A549 (cell line): ENCODE measurements at regions of chr7 and their contacts with region 1.

Region 1: GRCh38 chr7:101138213-101138870 is 11.4 kb downstream of the SERPINE1 start:
- DNase-seq: peak; percentile 75 to 96
- ATAC-seq: peak; percentile 39 to 73
- H3K4me3 ChIP-seq: no peak overlapping the region
- H3K27ac ChIP-seq: peak overlapping the region; percentile 79 to 88
- H3K4me1 ChIP-seq: peaks cover 57% of the 10 kb centered on the region
- CTCF ChIP-seq: peak; percentile 95
- EP300 ChIP-seq: peak; percentile 28 to 65; a peak in 3 of 5 replicates
- POLR2A ChIP-seq: no peak
- RAD21 ChIP-seq: peak; percentile 57 to 90

Region 2: DNA sequence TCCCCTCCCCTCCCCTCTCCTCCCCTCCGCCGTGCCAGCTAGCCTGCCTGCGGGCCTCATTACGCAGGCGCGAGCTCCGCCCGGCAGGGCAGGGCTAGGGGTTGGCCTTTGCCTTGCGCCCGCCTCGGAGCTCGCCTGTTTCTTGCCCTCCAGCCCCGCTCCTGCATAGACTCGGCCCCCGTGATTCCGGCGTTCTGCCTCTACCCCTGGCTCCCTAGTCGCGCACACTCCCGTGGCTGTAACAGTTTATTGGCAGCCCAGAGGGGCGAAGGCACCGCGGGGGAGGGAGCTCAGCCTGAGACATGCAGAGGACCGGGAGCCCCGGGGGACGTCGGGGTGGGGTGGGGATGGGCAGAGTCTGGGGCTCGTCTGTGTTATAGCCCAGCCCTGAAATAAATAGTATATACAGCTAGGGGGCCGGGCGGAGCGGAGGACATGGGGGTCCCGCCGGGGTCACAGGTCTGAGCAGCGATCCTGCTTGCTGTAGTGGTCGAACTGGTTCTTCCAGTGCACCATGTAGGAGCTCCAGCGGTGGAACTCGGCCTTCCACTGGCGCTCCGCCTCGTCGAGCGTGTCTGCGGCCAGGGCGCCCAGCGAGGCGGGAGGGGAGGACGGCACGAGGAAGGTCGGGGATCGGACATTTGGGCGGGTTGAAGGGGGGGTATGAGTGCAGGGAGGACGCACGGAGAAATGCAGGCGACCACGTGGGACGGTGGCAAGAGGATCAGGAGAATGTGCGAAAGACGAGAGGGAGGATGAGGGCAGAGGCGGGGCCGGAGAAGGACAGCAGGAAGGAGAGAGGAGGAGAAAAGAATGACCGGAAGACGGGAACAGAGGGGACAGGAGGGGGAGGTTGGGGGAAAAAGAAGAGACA is 248.3 kb before region 1 on chr7:
- CTCF ChIA-PET with region 1: interaction called, 25 read pairs
- POLR2A ChIA-PET with region 1: no interaction called
- DNase-seq: peak; percentile 93 to 96
- ATAC-seq: peak; percentile 68 to 91
- H3K4me3 ChIP-seq: peak overlapping the region; percentile 92
- H3K27ac ChIP-seq: peak overlapping the region; percentile 86 to 95
- H3K4me1 ChIP-seq: peaks cover 34% of the 10 kb centered on the region
- CTCF ChIP-seq: no peak
- EP300 ChIP-seq: no peak
- POLR2A ChIP-seq: peak; percentile 74
- RAD21 ChIP-seq: no peak

Region 3: DNA sequence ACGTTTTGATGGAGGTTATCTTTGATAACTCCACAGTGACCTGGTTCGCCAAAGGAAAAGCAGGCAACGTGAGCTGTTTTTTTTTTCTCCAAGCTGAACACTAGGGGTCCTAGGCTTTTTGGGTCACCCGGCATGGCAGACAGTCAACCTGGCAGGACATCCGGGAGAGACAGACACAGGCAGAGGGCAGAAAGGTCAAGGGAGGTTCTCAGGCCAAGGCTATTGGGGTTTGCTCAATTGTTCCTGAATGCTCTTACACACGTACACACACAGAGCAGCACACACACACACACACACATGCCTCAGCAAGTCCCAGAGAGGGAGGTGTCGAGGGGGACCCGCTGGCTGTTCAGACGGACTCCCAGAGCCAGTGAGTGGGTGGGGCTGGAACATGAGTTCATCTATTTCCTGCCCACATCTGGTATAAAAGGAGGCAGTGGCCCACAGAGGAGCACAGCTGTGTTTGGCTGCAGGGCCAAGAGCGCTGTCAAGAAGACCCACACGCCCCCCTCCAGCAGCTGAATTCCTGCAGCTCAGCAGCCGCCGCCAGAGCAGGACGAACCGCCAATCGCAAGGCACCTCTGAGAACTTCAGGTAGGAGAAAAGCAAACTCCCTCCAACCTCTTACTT is 11.6 kb before region 1 on chr7 and contains the start of gene SERPINE1:
- CTCF ChIA-PET with region 1: interaction called, 72 read pairs
- POLR2A ChIA-PET with region 1: interaction called, 24 read pairs
- DNase-seq: peak; percentile 98
- ATAC-seq: peak; percentile 73 to 78
- H3K4me3 ChIP-seq: peak within 1 kb of the TSS; percentile 63
- H3K27ac ChIP-seq: peak within 1 kb of the TSS; percentile 94 to 95
- H3K4me1 ChIP-seq: peaks cover 78% of the 10 kb centered on the region
- CTCF ChIP-seq: peak; percentile 29; the same call in 2 of the 3 replicates
- EP300 ChIP-seq: 0 out of 5 replicates have a peak, but pooled peaks of 1 of the 2 experiments have one; percentile 10
- POLR2A ChIP-seq: peak; percentile 98
- RAD21 ChIP-seq: peak in 1 of 2 experiments; percentile 8; a peak in 2 of 5 replicates
- polyA plus RNA-seq, gene SERPINE1: 300 and 355 TPM in 2 replicates

Region 4: GRCh38 chr7:101173752-101174244 is 35.5 kb after region 1 on chr7:
- CTCF ChIA-PET with region 1: interaction called, 56 read pairs
- POLR2A ChIA-PET with region 1: no interaction called
- DNase-seq: peak; percentile 59 to 81
- ATAC-seq: peak; percentile 57 to 70
- H3K4me3 ChIP-seq: peak overlapping the region; percentile 33
- H3K27ac ChIP-seq: peak overlapping the region; percentile 52 to 80; a peak in 5 of 6 replicates
- H3K4me1 ChIP-seq: peaks cover 49% of the 10 kb centered on the region
- CTCF ChIP-seq: no peak
- EP300 ChIP-seq: no peak
- POLR2A ChIP-seq: no peak
- RAD21 ChIP-seq: no peak

Region 5: GRCh38 chr7:101212014-101212557 is 73.7 kb after region 1 on chr7:
- CTCF ChIA-PET with region 1: interaction called, 20 read pairs
- POLR2A ChIA-PET with region 1: no interaction called
- DNase-seq: no peak
- ATAC-seq: no peak
- H3K4me3 ChIP-seq: no peak overlapping the region
- H3K27ac ChIP-seq: no peak overlapping the region
- H3K4me1 ChIP-seq: peaks cover 13% of the 10 kb centered on the region
- CTCF ChIP-seq: no peak
- EP300 ChIP-seq: no peak
- POLR2A ChIP-seq: no peak
- RAD21 ChIP-seq: no peak

Region 6: GRCh38 chr7:101244375-101245146 is 106.2 kb after region 1 on chr7 and contains the start of gene FIS1:
- CTCF ChIA-PET with region 1: interaction called, 60 read pairs
- POLR2A ChIA-PET with region 1: no interaction called
- DNase-seq: peak; percentile 85 to 93
- ATAC-seq: peak; percentile 97 to 98
- H3K4me3 ChIP-seq: peak within 1 kb of the TSS; percentile 88
- H3K27ac ChIP-seq: peak within 1 kb of the TSS; percentile 86 to 93
- H3K4me1 ChIP-seq: peaks cover 15% of the 10 kb centered on the region
- CTCF ChIP-seq: peak; percentile 75
- EP300 ChIP-seq: no peak
- POLR2A ChIP-seq: no peak; the same call in 1 of the 2 replicates
- RAD21 ChIP-seq: peak; percentile 43 to 66; a peak in 4 of 5 replicates
- polyA plus RNA-seq, gene FIS1: 111 TPM in 2 replicates